PC-3 (cell line): ENCODE measurements at regions of chr15 and their contacts with region 1.

Region 1: GRCh38 chr15:78308422-78309032 is 9.1 kb upstream of the SKIC8 start:
- DNase-seq: peak; percentile 79
- ATAC-seq: peak; percentile 88
- H3K4me3 ChIP-seq: peak overlapping the region; percentile 17; the same call in 1 of the 2 replicates
- H3K27ac ChIP-seq: no peak overlapping the region
- H3K4me1 ChIP-seq: no peaks in the 10 kb centered on the region
- H3K27me3 ChIP-seq: no peaks in the 10 kb centered on the region
- CTCF ChIP-seq: peak; percentile 94

Region 2: DNA sequence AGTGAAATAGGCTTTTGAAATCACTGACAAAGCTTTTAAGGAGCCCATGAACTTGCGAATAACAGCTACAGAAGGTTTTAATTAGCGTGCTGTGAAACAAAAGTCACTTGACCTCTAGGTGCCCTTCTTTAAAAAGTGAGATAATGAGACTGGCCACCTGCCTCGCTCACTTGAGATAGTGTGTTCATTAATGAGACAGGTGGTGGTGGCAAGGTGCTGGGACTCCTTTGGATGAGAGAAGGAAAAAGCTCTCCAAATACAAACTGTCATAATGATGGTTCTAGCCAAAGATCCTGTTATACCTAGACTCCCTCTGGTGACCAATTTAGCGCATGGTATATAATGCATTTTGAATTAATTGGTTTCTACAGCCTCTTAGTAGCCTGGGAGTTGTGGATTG is 106.8 kb after region 1 on chr15:
- CTCF ChIA-PET with region 1: interaction called, 4 read pairs
- POLR2A ChIA-PET with region 1: no interaction called
- intact Hi-C with region 1: loop called (anchors 1 kb)
- DNase-seq: peak; percentile 63
- ATAC-seq: peak; percentile 78
- H3K4me3 ChIP-seq: no peak overlapping the region
- H3K27ac ChIP-seq: no peak overlapping the region
- H3K4me1 ChIP-seq: peaks cover 4% of the 10 kb centered on the region; the same call in 1 of the 2 replicates
- H3K27me3 ChIP-seq: no peaks in the 10 kb centered on the region
- CTCF ChIP-seq: peak; percentile 66

Region 3: DNA sequence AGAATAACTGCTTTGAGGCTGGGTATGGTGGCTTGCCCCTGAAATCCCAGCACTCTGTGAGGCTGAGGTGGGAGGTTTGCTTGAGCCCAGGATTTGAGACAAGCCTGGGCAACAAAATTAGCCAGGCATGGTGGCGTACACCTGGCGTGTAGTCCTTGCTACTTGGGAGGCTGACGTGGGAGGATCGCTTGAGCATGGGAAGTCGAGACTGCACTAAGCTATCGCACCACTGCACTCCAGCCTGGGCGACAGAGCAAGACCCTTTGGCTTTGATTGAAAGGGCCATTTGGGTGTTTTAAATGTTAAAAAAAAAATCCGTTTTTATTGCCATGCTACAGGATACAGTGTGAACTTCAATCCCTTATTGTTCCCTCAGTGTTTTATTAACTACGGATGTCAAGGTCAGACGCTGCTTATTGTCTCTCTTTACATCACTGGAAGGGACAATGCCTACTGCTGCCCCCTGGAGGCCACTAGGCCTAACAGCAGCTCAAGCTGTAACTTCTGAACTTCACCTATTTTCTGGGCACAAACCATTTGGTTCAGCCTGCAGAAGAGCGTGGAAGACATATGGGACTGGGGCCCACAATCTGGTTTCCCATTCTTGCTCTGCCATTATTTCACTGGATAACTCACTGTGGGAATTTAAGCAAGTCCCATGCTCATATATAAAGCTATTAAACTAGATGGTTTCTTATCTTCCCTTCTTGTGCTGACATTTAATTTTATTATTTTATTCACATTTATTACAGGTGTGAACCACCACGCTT is 114.2 kb after region 1 on chr15:
- CTCF ChIA-PET with region 1: interaction called, 3 read pairs
- POLR2A ChIA-PET with region 1: no interaction called
- intact Hi-C with region 1: loop called (anchors 2 kb)
- DNase-seq: peak; percentile 69
- ATAC-seq: peak; percentile 53
- H3K4me3 ChIP-seq: no peak overlapping the region
- H3K27ac ChIP-seq: no peak overlapping the region
- H3K4me1 ChIP-seq: peaks cover 4% of the 10 kb centered on the region; the same call in 1 of the 2 replicates
- H3K27me3 ChIP-seq: no peaks in the 10 kb centered on the region
- CTCF ChIP-seq: peak; percentile 91

Region 4: DNA sequence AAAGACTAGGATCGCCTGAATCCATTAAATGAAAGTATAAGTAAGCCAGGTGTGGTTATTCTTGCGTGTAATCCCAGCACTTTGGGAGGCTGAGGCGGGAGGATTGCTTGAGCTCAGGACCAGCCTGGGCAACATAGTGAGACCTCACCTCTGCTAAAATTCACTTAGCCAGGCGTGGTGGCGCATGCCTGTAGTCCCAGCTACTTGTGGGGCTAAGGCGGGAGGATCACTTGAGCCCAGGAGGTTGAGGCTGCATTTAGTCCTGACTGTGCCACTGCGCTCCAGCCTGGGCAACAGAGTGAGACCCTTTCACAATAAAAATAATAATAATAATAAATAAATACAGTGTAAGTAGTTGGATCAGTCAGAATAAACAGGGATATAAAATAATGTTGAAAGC is 173.4 kb after region 1 on chr15:
- CTCF ChIA-PET with region 1: no interaction called
- POLR2A ChIA-PET with region 1: no interaction called
- intact Hi-C with region 1: loop called (anchors 1 kb)
- DNase-seq: no peak
- ATAC-seq: no peak
- H3K4me3 ChIP-seq: no peak overlapping the region
- H3K27ac ChIP-seq: no peak overlapping the region
- H3K4me1 ChIP-seq: no peaks in the 10 kb centered on the region
- H3K27me3 ChIP-seq: no peaks in the 10 kb centered on the region
- CTCF ChIP-seq: no peak

Region 5: DNA sequence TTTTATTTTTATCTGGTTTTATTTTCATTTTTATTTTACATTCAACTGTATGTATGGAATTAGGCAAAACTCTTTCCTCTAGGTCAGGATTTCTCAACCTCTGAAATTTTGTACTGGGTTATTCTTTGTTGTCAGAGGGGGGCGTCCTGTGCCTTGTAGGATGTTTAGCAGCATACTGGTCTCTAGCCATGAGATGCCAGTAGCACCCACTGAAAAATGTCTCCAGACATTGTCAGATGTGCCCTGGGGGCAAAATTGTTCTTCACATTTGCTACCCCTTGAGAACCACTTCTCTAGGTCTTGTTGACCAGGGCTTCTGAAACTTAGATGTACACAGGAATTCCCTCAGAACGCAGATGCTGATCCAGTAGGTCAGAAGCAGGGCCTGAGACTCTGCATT is 262.2 kb after region 1 on chr15:
- CTCF ChIA-PET with region 1: no interaction called
- POLR2A ChIA-PET with region 1: no interaction called
- intact Hi-C with region 1: no loop called
- DNase-seq: no peak
- ATAC-seq: no peak
- H3K4me3 ChIP-seq: no peak overlapping the region
- H3K27ac ChIP-seq: no peak overlapping the region
- H3K4me1 ChIP-seq: no peaks in the 10 kb centered on the region
- H3K27me3 ChIP-seq: no peaks in the 10 kb centered on the region
- CTCF ChIP-seq: no peak